ENCODE measurements at regions of chr5 and their contacts with region 1.

Region 1: DNA sequence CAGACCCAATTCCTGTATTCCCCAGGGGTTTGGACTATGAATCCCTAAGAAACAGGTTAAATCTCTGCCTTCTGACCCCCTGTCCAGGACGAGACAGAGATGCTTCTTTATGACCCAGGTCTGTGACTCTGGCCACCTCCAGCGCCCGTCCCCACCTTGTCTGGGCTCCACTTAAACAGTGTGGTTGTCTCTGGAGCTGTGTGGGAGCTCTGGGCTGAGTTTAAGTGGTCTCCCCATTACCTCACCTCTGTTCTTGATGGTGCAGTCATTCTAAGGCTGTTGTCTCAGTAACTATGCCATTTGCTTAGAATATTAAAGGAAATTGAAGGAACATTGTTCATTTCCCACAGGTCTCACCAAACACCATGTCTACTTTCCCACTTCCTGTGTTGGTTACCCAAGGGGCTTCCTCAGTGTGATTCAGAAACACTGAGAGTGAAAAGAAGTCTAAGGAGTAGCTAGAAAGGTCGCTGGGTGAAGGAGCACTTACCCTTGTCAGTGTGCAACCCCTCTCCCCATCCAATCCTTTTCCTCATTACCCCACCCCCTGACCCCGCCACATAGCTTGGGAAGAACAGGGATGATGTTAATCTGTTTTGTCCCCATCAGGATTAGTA is 127.8 kb upstream of the CKMT2 start:
- DNase-seq: peak; percentile 59
- H3K4me3 Mint-ChIP-seq: no peak overlapping the region
- H3K27ac Mint-ChIP-seq: no peak overlapping the region
- H3K4me1 Mint-ChIP-seq: peaks cover 25% of the 10 kb centered on the region
- H3K27me3 Mint-ChIP-seq: no peaks in the 10 kb centered on the region

Region 2: DNA sequence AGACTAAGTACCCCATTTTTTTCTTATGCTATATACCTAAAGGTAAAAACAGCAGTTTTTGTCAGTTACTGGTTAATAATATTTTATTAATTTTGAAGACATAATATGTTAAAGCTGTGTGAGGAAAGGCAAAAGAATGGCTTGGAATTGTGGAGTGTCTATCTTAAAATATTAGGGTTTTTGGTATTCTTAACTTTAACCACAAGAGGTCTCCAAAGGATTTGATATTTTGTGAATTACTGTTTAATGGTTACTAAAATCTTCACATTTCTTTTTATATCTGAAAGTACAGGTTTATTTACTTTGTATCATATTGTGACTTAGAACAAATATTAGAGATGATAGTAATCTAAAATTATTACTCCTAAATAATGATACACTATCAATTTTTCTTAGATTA is 418.6 kb before region 1 on chr5:
- intact Hi-C with region 1: loop called (anchors 1 kb)
- DNase-seq: no peak
- H3K4me3 Mint-ChIP-seq: no peak overlapping the region
- H3K27ac Mint-ChIP-seq: no peak overlapping the region
- H3K4me1 Mint-ChIP-seq: peaks cover 20% of the 10 kb centered on the region
- H3K27me3 Mint-ChIP-seq: no peaks in the 10 kb centered on the region

Region 3: GRCh38 chr5:80711938-80712337 is 393.4 kb before region 1 on chr5:
- intact Hi-C with region 1: loop called (anchors 5 kb)
- DNase-seq: no peak
- H3K4me3 Mint-ChIP-seq: no peak overlapping the region
- H3K27ac Mint-ChIP-seq: no peak overlapping the region
- H3K4me1 Mint-ChIP-seq: peaks cover 31% of the 10 kb centered on the region
- H3K27me3 Mint-ChIP-seq: no peaks in the 10 kb centered on the region

Region 4: GRCh38 chr5:80871541-80871961 is 233.8 kb before region 1 on chr5:
- intact Hi-C with region 1: loop called (anchors 5 kb)
- DNase-seq: no peak
- H3K4me3 Mint-ChIP-seq: no peak overlapping the region
- H3K27ac Mint-ChIP-seq: peak overlapping the region; percentile 89
- H3K4me1 Mint-ChIP-seq: peaks cover 24% of the 10 kb centered on the region
- H3K27me3 Mint-ChIP-seq: no peaks in the 10 kb centered on the region

Region 5: GRCh38 chr5:81006947-81007636 is 98.3 kb before region 1 on chr5:
- intact Hi-C with region 1: loop called (anchors 5 kb)
- DNase-seq: peak; percentile 89
- H3K4me3 Mint-ChIP-seq: peak overlapping the region; percentile 82
- H3K27ac Mint-ChIP-seq: peak overlapping the region; percentile 94
- H3K4me1 Mint-ChIP-seq: peaks cover 41% of the 10 kb centered on the region
- H3K27me3 Mint-ChIP-seq: no peaks in the 10 kb centered on the region

Measured in activated CD4-positive, alpha-beta T cell treated with anti-CD3 and anti-CD28 coated beads, Interleukin-2, amount 10 ng/mL, durations not matched to agents 24 days and 14 days (primary cell).